Aorta (tissue), 5 donors: ENCODE measurements at regions of chr16 and their contacts with region 1.

Region 1: GRCh38 chr16:77788181-77789084 is at the start of gene VAT1L:
- DNase-seq: peak; percentile 52 to 86
- ATAC-seq: peak; percentile 89
- H3K4me3 ChIP-seq: peak within 1 kb of the TSS; percentile 63 to 70
- H3K27ac ChIP-seq: no peak within 1 kb of the TSS
- H3K4me1 ChIP-seq: no peaks in the 10 kb centered on the region
- H3K27me3 ChIP-seq: no peaks in the 10 kb centered on the region
- total RNA-seq, gene VAT1L: 9.3 to 18.7 TPM

Region 2: GRCh38 chr16:77963185-77964044 is 175.0 kb after region 1 on chr16:
- intact Hi-C with region 1: loop called in 1 of 2 experiments (anchors 10 kb)
- DNase-seq: no peak
- ATAC-seq: no peak
- H3K4me3 ChIP-seq: no peak overlapping the region
- H3K27ac ChIP-seq: no peak overlapping the region
- H3K4me1 ChIP-seq: no peaks in the 10 kb centered on the region
- H3K27me3 ChIP-seq: no peaks in the 10 kb centered on the region